AG04450 (cell line): ENCODE measurements at regions of chr7 and their contacts with region 1.

Region 1: DNA sequence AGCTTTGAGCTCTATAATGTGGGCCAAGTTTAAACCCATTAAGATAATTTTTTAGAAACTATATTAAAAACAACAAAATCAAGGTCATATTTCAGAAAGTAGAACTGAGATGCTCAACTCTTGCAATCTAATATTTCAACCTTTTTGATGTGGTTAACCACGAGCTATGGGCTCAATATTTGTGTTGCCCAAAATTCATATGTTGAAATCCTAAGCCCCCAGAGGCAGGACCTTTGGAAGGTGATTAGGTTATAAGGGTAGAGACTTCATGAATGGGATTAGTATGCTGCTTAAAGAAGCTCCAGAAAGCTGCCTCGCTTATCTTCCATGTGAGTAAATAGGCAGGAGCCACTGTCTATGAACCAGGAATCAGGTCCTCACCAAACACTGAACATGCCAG is 284.4 kb downstream of the CRPPA start:
- DNase-seq: no peak
- H3K4me3 ChIP-seq: no peak overlapping the region
- H3K27ac ChIP-seq: no peak overlapping the region
- H3K27me3 ChIP-seq: no peaks in the 10 kb centered on the region
- CTCF ChIP-seq: no peak

Region 2: DNA sequence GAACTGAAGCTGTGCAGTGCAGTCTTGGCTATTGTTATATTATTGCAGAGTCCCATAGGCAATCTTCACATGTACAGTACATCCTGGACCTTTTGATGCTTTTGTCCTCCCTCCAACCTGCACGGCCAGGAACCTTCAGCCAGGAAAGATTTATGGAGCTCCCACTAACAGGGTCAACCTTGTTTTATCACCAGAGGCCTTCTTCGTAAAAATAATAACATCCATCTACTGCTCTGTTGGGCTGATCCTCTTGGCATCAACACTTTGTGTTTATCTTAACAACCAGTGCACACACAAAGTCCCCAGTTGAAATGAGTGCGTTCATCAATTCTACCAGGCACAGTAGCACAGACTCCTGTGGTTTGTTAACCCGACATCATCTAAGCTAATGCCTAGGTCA is 647.5 kb before region 1 on chr7:
- CTCF ChIA-PET with region 1: interaction called, 13 read pairs
- POLR2A ChIA-PET with region 1: no interaction called
- DNase-seq: no peak
- H3K4me3 ChIP-seq: no peak overlapping the region
- H3K27ac ChIP-seq: no peak overlapping the region
- H3K27me3 ChIP-seq: no peaks in the 10 kb centered on the region
- CTCF ChIP-seq: no peak

Region 3: DNA sequence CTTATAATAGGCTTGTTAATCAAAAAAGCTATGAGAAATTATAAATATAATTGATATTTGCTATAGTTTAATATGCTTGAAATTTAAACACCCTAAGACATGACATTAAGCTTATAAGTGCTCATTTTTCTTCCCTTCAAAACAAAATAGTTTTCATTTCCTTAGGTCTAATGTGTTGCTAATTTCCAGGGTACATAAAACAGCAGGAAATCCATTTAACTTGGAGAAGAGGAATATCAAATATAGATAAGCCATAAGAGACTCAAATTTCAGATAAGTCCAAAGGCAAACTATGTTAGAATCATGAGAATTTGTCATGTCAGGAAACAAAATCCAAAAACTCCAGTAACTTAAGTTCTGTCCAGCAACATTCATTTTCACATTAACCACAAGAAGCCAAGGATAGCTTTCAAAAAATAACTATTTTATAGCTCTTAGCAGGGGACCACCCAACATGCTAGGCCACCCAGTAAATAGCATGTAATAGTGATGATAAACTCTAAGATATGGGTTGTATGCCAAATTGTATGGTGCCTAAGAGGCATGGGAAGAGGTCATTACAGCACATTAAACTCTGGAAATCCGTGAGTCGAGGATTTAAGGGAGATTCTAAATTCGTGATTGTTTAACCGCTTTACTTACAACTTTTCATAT is 13.7 kb before region 1 on chr7:
- CTCF ChIA-PET with region 1: no interaction called
- POLR2A ChIA-PET with region 1: no interaction called
- DNase-seq: no peak
- H3K4me3 ChIP-seq: no peak overlapping the region
- H3K27ac ChIP-seq: no peak overlapping the region
- H3K27me3 ChIP-seq: no peaks in the 10 kb centered on the region
- CTCF ChIP-seq: no peak